ENCODE measurements at regions of chr19 and their contacts with region 1.

Region 1: DNA sequence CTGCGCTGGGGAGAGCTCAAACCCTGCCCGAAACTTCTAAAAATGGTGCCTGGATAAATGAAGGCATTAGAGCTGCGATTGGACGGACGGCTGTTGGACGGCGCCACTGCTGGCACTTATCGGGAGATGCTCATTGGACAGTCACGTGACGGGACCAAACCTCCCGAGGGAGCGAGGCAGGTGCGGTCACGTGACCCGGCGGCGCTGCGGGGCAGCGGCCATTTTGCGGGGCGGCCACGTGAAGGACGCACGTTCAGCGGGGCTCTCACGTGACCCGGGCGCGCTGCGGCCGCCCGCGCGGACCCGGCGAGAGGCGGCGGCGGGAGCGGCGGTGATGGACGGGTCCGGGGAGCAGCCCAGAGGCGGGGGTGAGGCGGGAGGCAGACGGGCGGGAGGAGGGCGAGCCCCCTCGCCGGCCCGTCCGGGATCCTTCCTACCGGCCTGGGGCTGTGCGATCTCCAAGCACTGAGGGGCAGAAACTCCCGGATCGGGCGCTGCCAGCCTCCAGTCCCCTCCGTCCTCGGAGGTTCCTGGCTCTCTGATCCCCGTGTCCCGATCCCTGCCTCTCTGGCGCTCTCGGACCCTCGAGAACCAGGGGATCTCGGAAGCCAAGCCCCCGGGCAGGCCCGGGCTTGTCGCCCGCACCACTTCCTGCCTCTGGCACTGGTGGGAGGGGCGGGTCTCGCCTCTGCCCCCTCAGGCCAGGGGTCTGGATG is at the start of gene BAX:
- DNase-seq: peak; percentile 91 to 96
- H3K4me3 ChIP-seq: peak within 1 kb of the TSS; percentile 69 to 96 (median 83)
- H3K27ac ChIP-seq: peak within 1 kb of the TSS; percentile 71 to 80
- H3K4me1 ChIP-seq: peaks cover 0 to 9% of the 10 kb centered on the region in 2 donors
- H3K27me3 ChIP-seq: no peaks in the 10 kb centered on the region
- CTCF ChIP-seq: no peak
- POLR2A ChIP-seq: no peak
- total RNA-seq, gene BAX: 34.2 to 56.0 (median 36.0) TPM

Region 2: GRCh38 chr19:48913114-48913889 is 41.5 kb before region 1 on chr19:
- intact Hi-C with region 1: no loop called
- DNase-seq: no peak
- H3K4me3 ChIP-seq: no peak overlapping the region
- H3K27ac ChIP-seq: no peak overlapping the region
- H3K4me1 ChIP-seq: no peaks in the 10 kb centered on the region
- H3K27me3 ChIP-seq: no peaks in the 10 kb centered on the region
- CTCF ChIP-seq: no peak
- POLR2A ChIP-seq: no peak

Region 3: GRCh38 chr19:48926909-48927308 is 27.8 kb before region 1 on chr19:
- intact Hi-C with region 1: loop called (anchors 1 kb)
- DNase-seq: peak in 1 of 2 donors; percentile 49
- H3K4me3 ChIP-seq: no peak overlapping the region
- H3K27ac ChIP-seq: no peak overlapping the region
- H3K4me1 ChIP-seq: no peaks in the 10 kb centered on the region
- H3K27me3 ChIP-seq: no peaks in the 10 kb centered on the region
- CTCF ChIP-seq: no peak
- POLR2A ChIP-seq: no peak

Region 4: DNA sequence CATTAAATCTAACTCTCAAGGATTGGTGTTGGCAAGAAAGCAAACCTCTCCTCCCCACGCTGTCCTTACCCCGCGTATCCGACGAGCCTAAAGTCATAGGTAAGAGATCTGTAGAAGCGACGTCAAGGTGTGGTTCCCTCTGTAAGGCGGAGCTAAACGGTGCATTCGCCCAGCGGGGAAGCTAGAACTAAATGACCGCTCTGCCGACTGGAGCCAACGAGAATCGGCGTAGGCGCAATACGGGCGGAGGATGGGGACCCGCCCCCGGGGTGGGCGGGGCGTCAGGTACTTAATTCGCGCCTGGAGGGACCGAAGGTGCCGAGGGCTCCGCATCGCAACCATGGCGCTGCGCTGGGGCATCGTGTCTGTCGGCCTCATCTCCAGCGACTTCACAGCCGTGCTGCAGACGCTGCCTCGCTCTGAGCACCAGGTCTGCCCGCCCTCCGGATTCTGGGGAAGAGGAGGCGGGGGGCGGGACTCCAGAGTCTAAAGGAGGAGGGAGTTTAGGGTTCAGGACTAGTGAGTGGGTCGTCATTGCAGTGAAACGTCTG is 21.3 kb before region 1 on chr19 and contains the start of gene DHDH:
- intact Hi-C with region 1: loop called (anchors 1 kb)
- DNase-seq: peak; percentile 65 to 74
- H3K4me3 ChIP-seq: peak within 1 kb of the TSS; percentile 41 to 67 (median 56)
- H3K27ac ChIP-seq: peak within 1 kb of the TSS; percentile 19 to 35
- H3K4me1 ChIP-seq: no peaks in the 10 kb centered on the region
- H3K27me3 ChIP-seq: no peaks in the 10 kb centered on the region
- CTCF ChIP-seq: no peak
- POLR2A ChIP-seq: no peak
- total RNA-seq, gene DHDH: 0.96 to 1.3 TPM in 2 of 3 donors, not detected in the other

Measured in breast epithelium (tissue), 4 donors.